ENCODE measurements at regions of chr4 and their contacts with region 1.

Region 1: GRCh38 chr4:41257257-41257901 is 651 bp downstream of the UCHL1 start:
- DNase-seq: peak in 1 of 2 donors; percentile 70
- H3K4me3 ChIP-seq: peak overlapping the region; percentile 56 to 74
- H3K27ac ChIP-seq: no peak overlapping the region
- H3K4me1 ChIP-seq: peaks cover 8 to 9% of the 10 kb centered on the region in 2 donors
- H3K27me3 ChIP-seq: no peaks in the 10 kb centered on the region
- CTCF ChIP-seq: no peak

Region 2: GRCh38 chr4:40962551-40963180 is 294.7 kb before region 1 on chr4:
- intact Hi-C with region 1: no loop called
- DNase-seq: no peak
- H3K4me3 ChIP-seq: no peak overlapping the region
- H3K27ac ChIP-seq: peak overlapping the region; percentile 53 to 70
- H3K4me1 ChIP-seq: peaks cover 14 to 27% of the 10 kb centered on the region in 2 donors
- H3K27me3 ChIP-seq: no peaks in the 10 kb centered on the region
- CTCF ChIP-seq: no peak

Region 3: DNA sequence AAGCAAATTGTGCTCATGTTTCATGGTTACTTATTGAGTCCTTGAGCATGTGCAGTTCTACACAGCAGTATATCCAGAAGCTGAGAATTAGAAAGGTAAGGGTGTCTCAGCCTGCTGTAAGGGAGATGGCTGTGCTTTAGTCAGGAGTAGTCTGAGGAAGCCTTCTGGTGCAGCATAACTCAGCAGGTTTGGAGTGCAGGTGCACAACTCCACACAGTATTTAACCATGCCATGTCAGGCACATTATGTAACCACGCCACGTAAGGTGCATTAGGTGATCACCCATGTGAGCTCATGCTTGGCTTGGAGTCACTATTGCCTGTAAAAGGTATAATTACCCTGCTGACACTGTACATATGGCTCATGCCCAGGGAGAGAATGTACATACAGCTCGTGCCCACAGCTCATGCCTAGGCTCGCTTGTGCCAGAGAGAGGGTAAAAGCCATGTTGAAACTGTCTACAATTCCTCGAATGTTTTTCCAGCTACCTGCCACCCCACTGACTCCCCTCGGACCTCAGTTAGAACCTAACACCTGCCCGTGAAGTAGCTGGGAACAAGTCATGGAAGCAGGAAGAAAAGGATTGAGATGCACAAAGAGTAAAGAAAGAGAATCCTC is 37.2 kb after region 1 on chr4:
- intact Hi-C with region 1: no loop called
- DNase-seq: no peak
- H3K4me3 ChIP-seq: no peak overlapping the region
- H3K27ac ChIP-seq: no peak overlapping the region
- H3K4me1 ChIP-seq: no peaks in the 10 kb centered on the region
- H3K27me3 ChIP-seq: no peaks in the 10 kb centered on the region
- CTCF ChIP-seq: no peak

Region 4: GRCh38 chr4:41346306-41347061 is 89.1 kb after region 1 on chr4:
- intact Hi-C with region 1: no loop called
- DNase-seq: no peak
- H3K4me3 ChIP-seq: no peak overlapping the region
- H3K27ac ChIP-seq: no peak overlapping the region
- H3K4me1 ChIP-seq: no peaks in the 10 kb centered on the region
- H3K27me3 ChIP-seq: no peaks in the 10 kb centered on the region
- CTCF ChIP-seq: no peak

Region 5: GRCh38 chr4:41882625-41883347 is 625.4 kb after region 1 on chr4:
- intact Hi-C with region 1: loop called (anchors 5 kb)
- DNase-seq: no peak
- H3K4me3 ChIP-seq: peak overlapping the region; percentile 53 to 70
- H3K27ac ChIP-seq: no peak overlapping the region
- H3K4me1 ChIP-seq: peaks cover 11 to 18% of the 10 kb centered on the region in 2 donors
- H3K27me3 ChIP-seq: peaks cover 18% of the 10 kb centered on the region
- CTCF ChIP-seq: peak; percentile 53 to 97 (median 94)

Measured in ascending aorta (tissue), 2 donors.